ENCODE measurements at regions of chr17 and their contacts with region 1.

Region 1: GRCh38 chr17:11278186-11278991 is 37.4 kb downstream of the SHISA6 start:
- DNase-seq: no peak
- H3K4me3 ChIP-seq: no peak overlapping the region
- H3K27ac ChIP-seq: peak overlapping the region in 1 of 2 donors; percentile 62
- H3K4me1 ChIP-seq: no peaks in the 10 kb centered on the region
- H3K27me3 ChIP-seq: no peaks in the 10 kb centered on the region
- CTCF ChIP-seq: no peak
- POLR2A ChIP-seq: no peak

Region 2: GRCh38 chr17:11302401-11303106 is 24.2 kb after region 1 on chr17:
- intact Hi-C with region 1: loop called (anchors 2 kb)
- DNase-seq: no peak
- H3K4me3 ChIP-seq: no peak overlapping the region
- H3K27ac ChIP-seq: no peak overlapping the region
- H3K4me1 ChIP-seq: no peaks in the 10 kb centered on the region
- H3K27me3 ChIP-seq: no peaks in the 10 kb centered on the region
- CTCF ChIP-seq: no peak
- POLR2A ChIP-seq: no peak